Motor neuron (in vitro differentiated cells): ENCODE measurements at regions of chr1 and their contacts with region 1.

Region 1: GRCh38 chr1:116724765-116725375 is 29.4 kb upstream of the CD2 start:
- ATAC-seq: peak in 3 of 8 experiments; percentile 46 to 59 (median 51)
- H3K4me3 ChIP-seq: no peak overlapping the region
- H3K27ac ChIP-seq: no peak overlapping the region
- H3K4me1 ChIP-seq: no peaks in the 10 kb centered on the region

Region 2: GRCh38 chr1:116345843-116346242 is 379.0 kb before region 1 on chr1:
- in situ Hi-C with region 1: no loop called
- ATAC-seq: peak in 6 of 8 experiments; percentile 28 to 98 (median 92)
- H3K4me3 ChIP-seq: no peak overlapping the region
- H3K27ac ChIP-seq: peak overlapping the region in 1 of 2 donors; percentile 59
- H3K4me1 ChIP-seq: peaks cover 12 to 28% of the 10 kb centered on the region in 2 donors

Region 3: GRCh38 chr1:116570358-116571200 is 154.3 kb before region 1 on chr1 and contains the start of gene CD58:
- in situ Hi-C with region 1: loop called in 1 of 9 experiments (anchors 25 kb)
- ATAC-seq: peak; percentile 69 to 88 (median 86)
- H3K4me3 ChIP-seq: peak within 1 kb of the TSS; percentile 40 to 56 (median 45)
- H3K27ac ChIP-seq: peak within 1 kb of the TSS; percentile 0 to 45
- H3K4me1 ChIP-seq: peaks cover 7 to 16% of the 10 kb centered on the region in 2 donors
- total RNA-seq, gene CD58: 2.5 to 64.5 (median 12.8) TPM